Activated CD4-positive, alpha-beta memory T cell treated with anti-CD3 and anti-CD28 coated beads for 36 hours (primary cell): ENCODE measurements at regions of chr16 and their contacts with region 1.

Region 1: DNA sequence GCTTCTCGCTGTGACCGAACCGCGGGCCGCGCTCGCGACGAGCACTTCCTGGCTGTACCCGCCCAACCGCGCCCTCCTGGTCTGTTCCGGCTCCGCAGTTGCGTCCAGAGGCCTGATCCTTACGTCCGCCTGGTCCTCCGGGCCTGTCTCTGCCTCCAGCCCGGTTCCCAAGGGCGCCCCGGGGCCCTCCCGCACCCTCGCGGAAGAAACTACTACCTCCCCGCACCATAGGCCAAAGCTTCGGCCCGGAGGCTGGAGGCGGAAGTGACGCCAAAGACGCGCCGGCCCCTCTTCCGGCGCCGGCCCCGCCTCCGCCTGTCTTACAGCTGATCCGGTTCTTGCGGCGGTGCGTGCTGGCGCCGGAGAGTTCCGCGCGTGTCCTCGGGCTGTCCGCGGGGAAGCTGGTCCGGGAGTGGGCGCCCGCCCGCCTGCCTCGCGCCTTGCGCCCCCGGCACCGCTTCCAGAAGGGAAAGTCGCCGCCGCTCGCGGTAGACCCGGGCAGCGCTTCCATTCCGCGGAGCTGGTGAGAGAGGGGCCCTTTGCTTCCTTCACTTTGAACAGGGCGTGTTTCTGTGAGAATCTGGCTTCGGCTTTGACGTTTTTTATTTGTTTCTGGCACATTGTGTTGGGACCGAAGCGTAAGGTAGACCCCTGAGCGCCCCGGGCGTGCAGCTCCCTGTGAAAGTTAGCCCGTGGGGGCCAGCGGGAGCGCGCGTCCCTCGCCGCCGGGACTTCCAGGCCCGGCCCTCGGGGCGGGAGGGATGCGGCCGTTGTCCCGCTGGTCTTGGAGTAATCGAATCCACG is at the start of gene ZNF778:
- DNase-seq: peak; percentile 87
- H3K4me3 Mint-ChIP-seq: peak within 1 kb of the TSS; percentile 75
- H3K27ac Mint-ChIP-seq: peak within 1 kb of the TSS; percentile 75
- H3K4me1 Mint-ChIP-seq: peaks cover 10% of the 10 kb centered on the region
- H3K27me3 Mint-ChIP-seq: no peaks in the 10 kb centered on the region
- total RNA-seq, gene ZNF778: 7.4 to 7.9 TPM

Region 2: DNA sequence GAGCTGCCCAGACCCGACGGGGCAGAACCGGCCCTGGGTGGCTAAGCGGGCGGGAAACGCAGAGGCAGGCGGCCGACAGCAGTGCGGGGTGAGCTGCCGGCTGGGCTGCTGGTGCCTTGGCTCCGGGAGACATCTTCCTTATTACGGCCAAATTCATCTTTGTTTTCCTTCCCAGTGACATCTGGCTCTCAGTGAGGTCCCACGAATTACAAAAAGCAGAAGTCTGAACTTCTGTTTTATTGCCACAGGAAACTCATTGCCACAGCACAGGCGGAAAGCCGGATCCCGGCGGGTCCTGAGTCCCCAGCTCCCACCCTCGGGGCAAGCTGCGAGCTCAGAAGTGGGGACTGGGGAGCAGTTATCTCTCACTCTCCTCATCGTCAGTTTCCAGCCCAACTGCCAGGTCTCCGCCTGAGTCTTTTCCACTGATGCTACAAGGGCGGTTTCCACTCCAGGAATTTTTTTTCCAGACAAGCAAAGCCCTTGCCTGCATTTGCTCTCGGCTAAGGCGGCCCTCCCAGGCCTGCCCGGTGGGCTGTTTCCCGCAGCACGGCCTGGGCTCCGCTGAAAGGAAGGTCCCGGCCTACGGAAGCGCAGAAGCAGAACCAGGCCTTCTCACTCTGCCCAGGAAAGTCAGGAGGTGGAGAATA is 280.9 kb before region 1 on chr16:
- CTCF ChIA-PET with region 1: no interaction called
- POLR2A ChIA-PET with region 1: no interaction called
- intact Hi-C with region 1: loop called (anchors 1 kb)
- DNase-seq: no peak
- H3K4me3 Mint-ChIP-seq: no peak overlapping the region
- H3K27ac Mint-ChIP-seq: no peak overlapping the region
- H3K4me1 Mint-ChIP-seq: no peaks in the 10 kb centered on the region
- H3K27me3 Mint-ChIP-seq: peaks cover 30% of the 10 kb centered on the region

Region 3: GRCh38 chr16:89026121-89026612 is 191.4 kb before region 1 on chr16:
- CTCF ChIA-PET with region 1: no interaction called
- POLR2A ChIA-PET with region 1: no interaction called
- intact Hi-C with region 1: loop called (anchors 2 kb)
- DNase-seq: peak; percentile 81
- H3K4me3 Mint-ChIP-seq: no peak overlapping the region
- H3K27ac Mint-ChIP-seq: peak overlapping the region; percentile 89
- H3K4me1 Mint-ChIP-seq: peaks cover 23% of the 10 kb centered on the region
- H3K27me3 Mint-ChIP-seq: no peaks in the 10 kb centered on the region

Region 4: DNA sequence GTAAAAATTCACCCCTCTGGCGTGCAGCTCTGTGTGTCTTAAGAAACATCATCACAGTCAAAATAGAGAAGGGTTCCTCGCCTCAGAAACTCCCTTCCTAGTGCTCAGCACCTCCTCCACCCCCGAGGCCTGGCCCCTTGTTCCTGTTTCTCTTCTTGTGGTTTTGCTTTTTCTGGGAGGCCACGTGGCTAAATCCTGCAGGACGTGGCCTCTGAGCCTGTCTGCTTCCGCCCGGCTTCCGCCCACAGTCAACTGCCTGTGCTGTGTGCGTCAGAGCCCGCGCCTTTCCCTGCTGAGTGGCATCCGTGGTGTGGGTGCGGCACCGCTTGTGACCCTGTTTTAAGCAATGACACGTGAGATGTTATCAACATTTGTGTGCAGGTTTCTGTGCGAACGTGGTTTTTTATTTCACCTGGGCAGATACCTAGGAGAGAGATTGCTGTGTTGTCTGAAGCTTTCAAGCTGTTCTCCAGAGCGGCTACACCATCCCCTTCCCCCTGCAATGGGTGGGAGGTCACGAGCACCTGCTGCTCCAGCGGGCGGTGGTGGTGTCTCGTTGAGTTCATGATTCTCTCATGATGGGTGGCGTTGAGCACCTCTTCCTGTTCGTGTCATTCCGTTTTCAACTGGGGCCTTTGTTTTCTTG is 102.3 kb before region 1 on chr16:
- CTCF ChIA-PET with region 1: no interaction called
- POLR2A ChIA-PET with region 1: no interaction called
- intact Hi-C with region 1: loop called (anchors 1 kb)
- DNase-seq: peak; percentile 91
- H3K4me3 Mint-ChIP-seq: peak overlapping the region; percentile 60
- H3K27ac Mint-ChIP-seq: peak overlapping the region; percentile 89
- H3K4me1 Mint-ChIP-seq: peaks cover 28% of the 10 kb centered on the region
- H3K27me3 Mint-ChIP-seq: no peaks in the 10 kb centered on the region

Region 5: DNA sequence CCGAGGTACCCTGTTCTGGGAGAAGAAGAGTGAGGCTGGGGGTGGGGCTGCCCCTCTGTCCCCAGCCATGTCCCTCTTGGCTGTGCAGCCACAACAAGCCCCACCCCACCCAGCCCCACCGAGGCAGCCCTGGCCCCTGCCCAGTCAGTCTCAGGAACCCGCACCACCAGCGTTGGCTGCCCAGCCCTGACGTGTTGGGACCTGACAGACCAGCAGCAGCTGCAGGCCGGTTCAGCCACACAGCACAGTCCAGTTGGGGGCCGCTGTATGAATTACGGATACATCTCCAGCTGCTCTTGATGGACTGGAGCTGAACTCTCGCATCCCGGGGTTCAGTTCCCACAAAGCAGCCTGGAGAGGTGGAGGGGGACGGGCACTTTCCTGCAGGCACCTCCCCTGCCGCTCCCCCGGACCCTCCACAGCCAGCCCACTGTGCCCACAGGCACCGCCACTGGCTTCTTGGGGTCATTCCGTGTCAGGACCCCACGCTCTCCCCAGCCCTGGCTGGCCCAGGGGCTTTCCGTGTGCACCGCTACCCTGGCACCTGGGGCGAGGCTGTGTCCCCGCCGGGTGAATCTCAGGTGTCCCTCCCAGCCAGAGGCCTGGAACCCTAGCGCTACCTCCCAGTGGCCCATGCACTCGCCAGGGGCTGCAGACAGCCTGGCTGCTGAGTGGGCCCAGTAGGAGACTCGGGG is 39.0 kb before region 1 on chr16:
- CTCF ChIA-PET with region 1: no interaction called
- POLR2A ChIA-PET with region 1: no interaction called
- intact Hi-C with region 1: no loop called
- DNase-seq: no peak
- H3K4me3 Mint-ChIP-seq: no peak overlapping the region
- H3K27ac Mint-ChIP-seq: no peak overlapping the region
- H3K4me1 Mint-ChIP-seq: peaks cover 2% of the 10 kb centered on the region
- H3K27me3 Mint-ChIP-seq: no peaks in the 10 kb centered on the region

Region 6: GRCh38 chr16:89241187-89242007 is 23.8 kb after region 1 on chr16:
- CTCF ChIA-PET with region 1: interaction called, 16 read pairs
- POLR2A ChIA-PET with region 1: interaction called, 5 read pairs
- intact Hi-C with region 1: loop called (anchors 1 kb)
- DNase-seq: peak; percentile 86
- H3K4me3 Mint-ChIP-seq: peak overlapping the region; percentile 97
- H3K27ac Mint-ChIP-seq: peak overlapping the region; percentile 96
- H3K4me1 Mint-ChIP-seq: peaks cover 4% of the 10 kb centered on the region
- H3K27me3 Mint-ChIP-seq: no peaks in the 10 kb centered on the region